A549 (cell line): ENCODE measurements at regions of chr3 and their contacts with region 1.

Region 1: GRCh38 chr3:195119461-195120198 is 151.3 kb downstream of the XXYLT1 start:
- DNase-seq: peak in 1 of 2 experiments; percentile 6
- ATAC-seq: peak in 1 of 2 experiments; percentile 76; a peak in 3 of 6 replicates
- H3K4me3 ChIP-seq: no peak overlapping the region
- H3K27ac ChIP-seq: peak overlapping the region in 1 of 2 experiments; percentile 73; a peak in 3 of 6 replicates
- H3K4me1 ChIP-seq: 0 out of 3 replicates have a peak, but pooled peaks cover 7% of the 10 kb centered on the region
- CTCF ChIP-seq: no peak
- EP300 ChIP-seq: no peak
- POLR2A ChIP-seq: no peak
- RAD21 ChIP-seq: no peak

Region 2: DNA sequence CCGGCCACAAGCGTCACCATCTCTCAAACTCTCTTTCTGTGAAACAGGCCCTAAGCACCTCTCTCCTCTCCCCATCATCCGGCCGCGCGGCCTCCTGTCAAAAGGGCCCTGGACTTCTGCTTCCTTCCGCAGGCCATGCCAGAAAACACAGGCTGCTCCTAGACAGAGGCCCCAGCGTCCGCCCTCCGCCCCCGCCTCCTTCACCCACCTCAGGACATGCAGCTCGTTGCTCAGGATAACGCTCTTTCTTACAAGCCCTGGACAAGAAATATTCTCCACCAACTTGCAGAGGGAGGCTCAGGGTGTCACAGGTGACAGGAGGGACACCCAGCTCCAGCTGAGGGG is 60.7 kb before region 1 on chr3:
- CTCF ChIA-PET with region 1: no interaction called
- POLR2A ChIA-PET with region 1: no interaction called
- DNase-seq: no peak
- ATAC-seq: no peak
- H3K4me3 ChIP-seq: no peak overlapping the region
- H3K27ac ChIP-seq: no peak overlapping the region
- H3K4me1 ChIP-seq: no peaks in the 10 kb centered on the region
- CTCF ChIP-seq: no peak
- EP300 ChIP-seq: no peak
- POLR2A ChIP-seq: no peak
- RAD21 ChIP-seq: no peak

Region 3: DNA sequence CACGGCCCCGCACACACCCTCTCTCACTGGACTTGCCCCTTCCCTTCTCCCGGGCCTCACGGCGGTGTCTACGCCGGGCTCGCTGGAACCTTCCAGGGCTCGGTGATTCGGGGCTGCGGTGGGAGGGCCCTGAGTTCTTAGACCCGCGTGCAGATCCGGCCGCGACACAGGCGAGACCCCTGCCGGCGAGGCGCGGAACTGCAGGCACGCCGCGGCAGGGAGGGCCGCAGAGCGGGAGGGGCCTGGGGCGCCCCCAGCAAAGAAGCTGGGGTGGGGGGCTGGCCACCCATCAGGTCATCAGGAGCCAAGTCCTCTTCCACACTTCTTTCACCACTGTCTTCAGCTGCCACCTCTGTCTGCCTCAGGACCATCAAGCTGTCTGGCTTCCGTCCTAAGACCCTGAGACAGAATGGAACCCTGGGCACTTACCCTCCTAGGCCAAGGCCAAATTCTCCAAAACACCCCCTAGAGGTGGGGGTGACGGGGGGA is 13.2 kb before region 1 on chr3:
- CTCF ChIA-PET with region 1: interaction called, 15 read pairs
- POLR2A ChIA-PET with region 1: no interaction called
- DNase-seq: peak; percentile 34 to 39
- ATAC-seq: peak; percentile 74 to 91
- H3K4me3 ChIP-seq: no peak overlapping the region
- H3K27ac ChIP-seq: peak overlapping the region in 1 of 2 experiments; percentile 54; a peak in 2 of 6 replicates
- H3K4me1 ChIP-seq: peaks cover 46% of the 10 kb centered on the region
- CTCF ChIP-seq: peak; percentile 77
- EP300 ChIP-seq: no peak
- POLR2A ChIP-seq: no peak
- RAD21 ChIP-seq: peak; percentile 82 to 85